Stomach (tissue), 19 donors: ENCODE measurements at regions of chr9 and their contacts with region 1.

Region 1: GRCh38 chr9:32968101-32969011 is 33.1 kb downstream of the APTX start:
- DNase-seq: peak; percentile 53 to 74
- H3K4me3 ChIP-seq: no peak overlapping the region
- H3K27ac ChIP-seq: no peak overlapping the region
- H3K4me1 ChIP-seq: peaks cover 0 to 7% (median 0%) of the 10 kb centered on the region in 4 donors
- H3K27me3 ChIP-seq: no peaks in the 10 kb centered on the region
- CTCF ChIP-seq: peak in 5 of 7 experiments; percentile 31 to 88 (median 72)
- EP300 ChIP-seq: no peak
- POLR2A ChIP-seq: no peak

Region 2: GRCh38 chr9:32378993-32379729 is 589.2 kb before region 1 on chr9:
- intact Hi-C with region 1: loop called (anchors 10 kb)
- DNase-seq: peak in 1 of 2 donors; percentile 92
- H3K4me3 ChIP-seq: no peak overlapping the region
- H3K27ac ChIP-seq: no peak overlapping the region
- H3K4me1 ChIP-seq: peaks cover 0 to 19% (median 12%) of the 10 kb centered on the region in 4 donors
- H3K27me3 ChIP-seq: no peaks in the 10 kb centered on the region
- CTCF ChIP-seq: peak in 5 of 7 experiments; percentile 42 to 89 (median 75)
- EP300 ChIP-seq: no peak
- POLR2A ChIP-seq: no peak

Region 3: GRCh38 chr9:32500768-32501167 is 467.6 kb before region 1 on chr9:
- intact Hi-C with region 1: no loop called
- DNase-seq: no peak
- H3K4me3 ChIP-seq: no peak overlapping the region
- H3K27ac ChIP-seq: no peak overlapping the region
- H3K4me1 ChIP-seq: no peaks in the 10 kb centered on the region
- H3K27me3 ChIP-seq: no peaks in the 10 kb centered on the region
- CTCF ChIP-seq: no peak
- EP300 ChIP-seq: no peak
- POLR2A ChIP-seq: no peak